Heart right ventricle (tissue), 16 donors: ENCODE measurements at regions of chr1 and their contacts with region 1.

Region 1: GRCh38 chr1:218557731-218558130 is 212.6 kb downstream of the TGFB2 start:
- DNase-seq: peak in 1 of 2 donors; percentile 66
- ATAC-seq: peak; percentile 60 to 84 (median 72)
- H3K4me3 ChIP-seq: no peak overlapping the region
- H3K27ac ChIP-seq: no peak overlapping the region
- H3K4me1 ChIP-seq: peaks cover 0 to 16% (median 5%) of the 10 kb centered on the region in 9 donors
- H3K27me3 ChIP-seq: no peaks in the 10 kb centered on the region
- CTCF ChIP-seq: no peak

Region 2: DNA sequence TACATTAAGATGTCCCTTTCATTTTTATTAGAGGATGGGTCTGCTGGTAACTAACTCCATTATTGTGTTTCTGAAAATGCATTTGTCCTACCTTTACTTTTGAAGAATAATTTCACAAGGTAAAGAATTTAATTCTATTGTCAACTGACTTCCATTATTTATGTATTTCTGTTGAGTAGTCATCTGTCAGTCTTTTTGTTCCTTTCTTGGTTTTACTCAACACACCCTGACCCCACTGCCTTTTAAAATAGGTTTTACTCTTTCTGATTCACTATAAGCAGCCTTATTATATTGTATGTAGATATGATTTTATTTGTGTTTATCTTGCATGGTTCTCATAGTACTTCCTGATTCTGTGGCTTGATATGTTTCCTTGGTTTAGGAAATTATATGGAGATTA is 24.9 kb after region 1 on chr1:
- intact Hi-C with region 1: loop called in 1 of 10 experiments (anchors 2 kb)
- DNase-seq: no peak
- ATAC-seq: no peak
- H3K4me3 ChIP-seq: no peak overlapping the region
- H3K27ac ChIP-seq: no peak overlapping the region
- H3K4me1 ChIP-seq: peaks cover 0 to 23% (median 7%) of the 10 kb centered on the region in 9 donors
- H3K27me3 ChIP-seq: no peaks in the 10 kb centered on the region
- CTCF ChIP-seq: no peak